Natural killer cell (primary cell): ENCODE measurements at regions of chr11 and their contacts with region 1.

Region 1: DNA sequence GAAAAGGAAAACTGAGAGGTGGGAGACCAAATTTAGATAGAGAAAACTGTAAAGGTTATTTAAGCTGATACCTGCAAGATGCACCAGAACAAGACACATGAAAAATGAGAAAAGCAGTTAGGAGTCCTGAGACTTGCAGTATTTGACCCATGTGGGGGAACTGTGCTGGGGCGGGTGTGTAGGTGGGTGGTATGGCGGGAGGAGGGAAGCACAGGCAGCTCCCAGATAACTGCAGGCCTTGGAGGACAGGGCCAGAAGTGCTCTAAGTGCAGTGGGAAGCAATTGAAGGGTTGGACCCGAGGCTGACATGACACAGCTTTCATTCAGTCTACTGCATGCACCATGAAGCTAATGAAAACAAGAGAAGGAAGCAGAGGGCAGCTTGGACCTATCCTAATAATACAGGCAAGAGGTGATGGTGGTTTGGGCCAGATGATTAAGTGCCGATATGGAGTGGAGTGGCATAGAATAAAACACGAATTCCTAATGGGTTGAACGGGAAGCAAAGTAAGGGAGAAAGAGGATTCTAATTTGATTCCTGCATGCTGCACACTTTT is 48.0 kb upstream of the ANO3 start:
- DNase-seq: no peak
- ATAC-seq: no peak
- H3K4me3 ChIP-seq: no peak overlapping the region
- H3K4me3 Mint-ChIP-seq: peak overlapping the region; percentile 58
- H3K27ac ChIP-seq: no peak overlapping the region
- H3K27ac Mint-ChIP-seq: no peak overlapping the region
- H3K4me1 ChIP-seq: peaks cover 4% of the 10 kb centered on the region
- H3K4me1 Mint-ChIP-seq: peaks cover 0 to 8% of the 10 kb centered on the region in 2 donors
- H3K27me3 ChIP-seq: peaks cover 2% of the 10 kb centered on the region
- H3K27me3 Mint-ChIP-seq: no peaks in the 10 kb centered on the region
- CTCF ChIP-seq: no peak

Region 2: GRCh38 chr11:27485930-27486773 is 1202.2 kb after region 1 on chr11:
- intact Hi-C with region 1: loop called (anchors 2 kb)
- DNase-seq: peak in 1 of 2 donors; percentile 75
- ATAC-seq: peak in 2 of 3 donors; percentile 61 to 64
- H3K4me3 ChIP-seq: no peak overlapping the region
- H3K4me3 Mint-ChIP-seq: no peak overlapping the region
- H3K27ac ChIP-seq: no peak overlapping the region
- H3K27ac Mint-ChIP-seq: no peak overlapping the region
- H3K4me1 ChIP-seq: no peaks in the 10 kb centered on the region
- H3K4me1 Mint-ChIP-seq: no peaks in the 10 kb centered on the region
- H3K27me3 ChIP-seq: no peaks in the 10 kb centered on the region
- H3K27me3 Mint-ChIP-seq: no peaks in the 10 kb centered on the region
- CTCF ChIP-seq: peak; percentile 85